Mucosa of descending colon (tissue), 3 donors: ENCODE measurements at regions of chr4 and their contacts with region 1.

Region 1: DNA sequence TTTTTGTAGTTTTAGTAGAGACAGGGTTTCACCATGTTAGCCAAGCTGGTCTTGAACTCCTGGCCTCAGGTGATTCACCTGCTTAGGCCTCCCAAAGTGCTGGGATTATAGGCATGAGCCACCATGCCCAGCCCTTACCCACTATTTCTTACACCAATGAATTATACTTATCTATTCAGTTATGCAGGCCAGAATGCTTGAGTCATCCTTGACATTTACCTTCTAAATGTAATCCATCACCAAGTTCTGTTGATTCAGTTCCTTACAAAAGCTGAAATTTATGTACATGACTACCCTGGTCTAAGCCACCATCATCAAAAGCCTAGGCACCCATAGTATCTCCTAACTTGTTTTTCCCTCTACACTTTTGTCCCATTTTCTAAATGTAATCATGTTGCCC is 585.7 kb downstream of the IL15 start:
- DNase-seq: no peak
- ATAC-seq: no peak
- H3K4me3 ChIP-seq: no peak overlapping the region
- H3K4me1 ChIP-seq: no peaks in the 10 kb centered on the region
- CTCF ChIP-seq: no peak

Region 2: DNA sequence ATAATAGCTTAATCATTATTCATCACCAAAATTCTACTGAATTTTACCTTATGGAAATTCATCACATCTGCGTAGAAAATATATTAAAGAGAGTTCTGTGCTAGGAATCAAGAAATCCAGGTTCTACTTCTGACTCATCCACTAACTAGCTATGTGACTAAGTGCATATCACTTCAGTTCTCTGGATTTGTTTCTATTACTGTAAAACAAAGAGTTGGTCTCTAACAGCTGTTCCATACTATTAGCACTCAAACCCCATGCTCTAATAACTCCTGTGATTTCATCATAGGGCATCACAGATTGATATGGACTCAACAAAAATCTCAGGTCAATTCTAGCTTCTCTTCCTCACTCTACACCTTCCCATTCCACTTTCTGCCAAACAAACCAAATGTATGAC is 52.0 kb after region 1 on chr4:
- intact Hi-C with region 1: loop called in 1 of 2 experiments (anchors 10 kb)
- DNase-seq: no peak
- ATAC-seq: no peak
- H3K4me3 ChIP-seq: no peak overlapping the region
- H3K4me1 ChIP-seq: no peaks in the 10 kb centered on the region
- CTCF ChIP-seq: no peak